Pancreas (tissue), 10 donors: ENCODE measurements at regions of chr5 and their contacts with region 1.

Region 1: GRCh38 chr5:174300941-174301761 is 255.6 kb downstream of the NSG2 start:
- DNase-seq: no peak
- ATAC-seq: no peak
- H3K4me3 ChIP-seq: no peak overlapping the region
- H3K27ac ChIP-seq: no peak overlapping the region
- H3K4me1 ChIP-seq: no peaks in the 10 kb centered on the region
- H3K27me3 ChIP-seq: no peaks in the 10 kb centered on the region
- CTCF ChIP-seq: no peak

Region 2: GRCh38 chr5:172454358-172455086 is 1846.6 kb before region 1 on chr5 and contains the start of gene SH3PXD2B:
- intact Hi-C with region 1: no loop called
- DNase-seq: peak; percentile 71 to 88 (median 78)
- ATAC-seq: peak; percentile 43 to 77 (median 53)
- H3K4me3 ChIP-seq: peak within 1 kb of the TSS; percentile 80 to 87 (median 82)
- H3K27ac ChIP-seq: peak within 1 kb of the TSS; percentile 10 to 75 (median 45)
- H3K4me1 ChIP-seq: peaks cover 0 to 5% (median 3%) of the 10 kb centered on the region in 3 donors
- H3K27me3 ChIP-seq: no peaks in the 10 kb centered on the region
- CTCF ChIP-seq: no peak
- total RNA-seq, gene SH3PXD2B: 9.7 to 24.9 (median 12.9) TPM

Region 3: GRCh38 chr5:174056064-174056847 is 244.9 kb before region 1 on chr5:
- intact Hi-C with region 1: loop called in 1 of 3 experiments (anchors 10 kb)
- DNase-seq: no peak
- ATAC-seq: no peak
- H3K4me3 ChIP-seq: no peak overlapping the region
- H3K27ac ChIP-seq: no peak overlapping the region
- H3K4me1 ChIP-seq: no peaks in the 10 kb centered on the region
- H3K27me3 ChIP-seq: no peaks in the 10 kb centered on the region
- CTCF ChIP-seq: no peak

Region 4: GRCh38 chr5:174418928-174419796 is 118.0 kb after region 1 on chr5:
- intact Hi-C with region 1: no loop called
- DNase-seq: peak; percentile 76 to 97 (median 89)
- ATAC-seq: peak; percentile 90 to 99 (median 98)
- H3K4me3 ChIP-seq: no peak overlapping the region
- H3K27ac ChIP-seq: no peak overlapping the region
- H3K4me1 ChIP-seq: no peaks in the 10 kb centered on the region
- H3K27me3 ChIP-seq: peaks cover 0 to 6% (median 0%) of the 10 kb centered on the region in 4 donors
- CTCF ChIP-seq: peak; percentile 77 to 90 (median 84)